CD4-positive, alpha-beta T cell (primary cell): ENCODE measurements at regions of chr1 and their contacts with region 1.

Region 1: DNA sequence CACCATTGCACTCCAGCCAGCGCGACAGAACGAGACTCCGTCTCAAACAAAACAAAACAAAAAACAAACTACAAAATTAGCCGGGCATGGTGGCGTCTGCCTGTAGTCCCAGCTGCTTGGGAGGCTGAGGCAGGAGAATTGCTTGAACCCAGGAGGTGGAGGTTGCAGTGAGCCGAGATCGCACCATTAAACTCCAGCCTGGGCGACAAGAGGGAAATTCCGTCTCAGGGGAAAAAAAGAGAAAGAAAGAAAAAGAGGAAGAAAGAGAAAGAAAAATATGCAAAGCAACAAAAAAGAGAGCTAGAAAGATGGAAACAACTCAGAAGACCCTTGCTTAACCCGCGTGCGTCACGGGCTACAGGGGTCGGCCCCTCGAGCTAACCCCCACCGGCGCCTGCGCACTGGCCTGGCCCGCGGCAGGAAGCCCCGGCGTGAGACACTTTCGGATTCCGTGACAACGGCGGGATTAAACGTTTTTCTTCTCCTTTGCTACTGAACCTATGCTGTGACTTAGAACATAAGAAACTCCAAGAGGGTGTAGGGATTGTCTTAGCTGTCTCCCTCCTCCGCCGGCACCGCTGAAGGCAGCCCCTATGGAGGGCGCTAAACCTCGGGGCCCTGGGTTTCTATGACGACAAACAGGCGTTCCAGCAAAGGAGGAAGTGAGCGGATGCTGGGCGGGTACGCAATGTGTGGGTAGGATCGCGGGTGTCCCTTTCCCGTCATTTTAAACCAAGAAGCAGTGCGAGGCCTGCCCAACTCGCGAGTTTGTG is at the start of gene AXDND1:
- DNase-seq: peak; percentile 80 to 96 (median 86)
- ATAC-seq: peak; percentile 90
- H3K4me3 ChIP-seq: peak within 1 kb of the TSS; percentile 79
- H3K4me3 Mint-ChIP-seq: peak within 1 kb of the TSS; percentile 96
- H3K27ac ChIP-seq: peak within 1 kb of the TSS; percentile 94 to 99
- H3K27ac Mint-ChIP-seq: peak within 1 kb of the TSS; percentile 99
- H3K4me1 ChIP-seq: peaks cover 14% of the 10 kb centered on the region
- H3K4me1 Mint-ChIP-seq: peaks cover 14% of the 10 kb centered on the region
- H3K27me3 ChIP-seq: no peaks in the 10 kb centered on the region
- H3K27me3 Mint-ChIP-seq: no peaks in the 10 kb centered on the region
- CTCF ChIP-seq: no peak
- total RNA-seq, gene AXDND1: 1.1 TPM

Region 2: GRCh38 chr1:177561436-177561835 is 1804.1 kb before region 1 on chr1:
- CTCF ChIA-PET with region 1: no interaction called
- POLR2A ChIA-PET with region 1: no interaction called
- intact Hi-C with region 1: no loop called
- DNase-seq: no peak
- ATAC-seq: no peak
- H3K4me3 ChIP-seq: no peak overlapping the region
- H3K4me3 Mint-ChIP-seq: no peak overlapping the region
- H3K27ac ChIP-seq: no peak overlapping the region
- H3K27ac Mint-ChIP-seq: no peak overlapping the region
- H3K4me1 ChIP-seq: no peaks in the 10 kb centered on the region
- H3K4me1 Mint-ChIP-seq: no peaks in the 10 kb centered on the region
- H3K27me3 ChIP-seq: no peaks in the 10 kb centered on the region
- H3K27me3 Mint-ChIP-seq: no peaks in the 10 kb centered on the region
- CTCF ChIP-seq: no peak

Region 3: DNA sequence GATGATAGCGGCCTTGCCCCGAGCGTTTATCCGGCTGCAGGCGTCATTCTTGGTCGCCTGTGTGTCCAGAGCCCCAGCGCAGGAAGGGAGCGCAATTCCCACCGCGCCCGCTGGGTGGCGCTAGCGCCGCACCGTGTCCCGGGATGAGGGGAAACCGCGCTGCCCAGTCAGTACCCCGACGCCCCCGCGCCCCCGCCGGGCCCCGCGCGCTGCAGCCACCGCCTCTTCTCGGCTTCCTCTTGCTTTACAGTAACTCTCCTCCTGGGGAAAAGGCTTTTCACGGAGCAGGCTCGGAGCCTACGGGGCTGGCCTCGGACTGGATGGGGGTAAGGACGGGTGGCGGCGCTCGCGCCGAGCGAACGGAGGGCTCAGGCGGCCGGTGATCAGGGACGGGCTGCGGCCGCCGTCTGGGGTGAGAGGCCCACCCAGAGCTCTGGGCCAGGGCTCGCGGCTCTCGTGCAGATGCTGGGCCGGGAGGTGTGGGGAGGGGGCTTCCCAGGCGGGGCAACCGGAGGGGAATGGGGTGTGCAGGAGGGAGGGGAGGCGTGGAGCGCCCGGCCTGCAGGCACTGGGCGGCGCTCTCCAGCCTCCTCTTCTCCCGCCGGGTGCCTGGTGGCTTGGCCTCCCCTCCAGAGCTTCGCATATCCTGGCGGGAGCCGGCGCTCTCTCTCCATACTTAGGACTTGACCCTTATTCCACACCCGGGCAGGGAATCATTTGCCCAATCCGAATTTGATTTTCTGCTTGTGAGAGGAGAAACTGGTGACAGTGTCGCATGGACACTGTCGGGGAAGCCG is 822.7 kb before region 1 on chr1:
- CTCF ChIA-PET with region 1: no interaction called
- POLR2A ChIA-PET with region 1: no interaction called
- intact Hi-C with region 1: loop called in 1 of 2 experiments (anchors 5 kb)
- DNase-seq: peak; percentile 59 to 91 (median 84)
- ATAC-seq: peak; percentile 90
- H3K4me3 ChIP-seq: peak overlapping the region; percentile 77
- H3K4me3 Mint-ChIP-seq: peak overlapping the region; percentile 93
- H3K27ac ChIP-seq: no peak overlapping the region
- H3K27ac Mint-ChIP-seq: peak overlapping the region; percentile 39
- H3K4me1 ChIP-seq: peaks cover 16% of the 10 kb centered on the region
- H3K4me1 Mint-ChIP-seq: peaks cover 10% of the 10 kb centered on the region
- H3K27me3 ChIP-seq: no peaks in the 10 kb centered on the region
- H3K27me3 Mint-ChIP-seq: no peaks in the 10 kb centered on the region
- CTCF ChIP-seq: peak; percentile 99

Region 4: GRCh38 chr1:179025125-179025974 is 340.2 kb before region 1 on chr1 and contains the start of gene FAM20B:
- CTCF ChIA-PET with region 1: no interaction called
- POLR2A ChIA-PET with region 1: interaction called, 3 read pairs
- intact Hi-C with region 1: loop called (anchors 2 to 5 kb)
- DNase-seq: peak; percentile 79 to 95 (median 90)
- ATAC-seq: peak; percentile 85
- H3K4me3 ChIP-seq: peak within 1 kb of the TSS; percentile 76
- H3K4me3 Mint-ChIP-seq: peak within 1 kb of the TSS; percentile 89
- H3K27ac ChIP-seq: peak within 1 kb of the TSS; percentile 46 to 51
- H3K27ac Mint-ChIP-seq: peak within 1 kb of the TSS; percentile 76
- H3K4me1 ChIP-seq: peaks cover 17% of the 10 kb centered on the region
- H3K4me1 Mint-ChIP-seq: peaks cover 48% of the 10 kb centered on the region
- H3K27me3 ChIP-seq: no peaks in the 10 kb centered on the region
- H3K27me3 Mint-ChIP-seq: no peaks in the 10 kb centered on the region
- CTCF ChIP-seq: no peak
- total RNA-seq, gene FAM20B: 12.1 to 12.9 TPM

Region 5: DNA sequence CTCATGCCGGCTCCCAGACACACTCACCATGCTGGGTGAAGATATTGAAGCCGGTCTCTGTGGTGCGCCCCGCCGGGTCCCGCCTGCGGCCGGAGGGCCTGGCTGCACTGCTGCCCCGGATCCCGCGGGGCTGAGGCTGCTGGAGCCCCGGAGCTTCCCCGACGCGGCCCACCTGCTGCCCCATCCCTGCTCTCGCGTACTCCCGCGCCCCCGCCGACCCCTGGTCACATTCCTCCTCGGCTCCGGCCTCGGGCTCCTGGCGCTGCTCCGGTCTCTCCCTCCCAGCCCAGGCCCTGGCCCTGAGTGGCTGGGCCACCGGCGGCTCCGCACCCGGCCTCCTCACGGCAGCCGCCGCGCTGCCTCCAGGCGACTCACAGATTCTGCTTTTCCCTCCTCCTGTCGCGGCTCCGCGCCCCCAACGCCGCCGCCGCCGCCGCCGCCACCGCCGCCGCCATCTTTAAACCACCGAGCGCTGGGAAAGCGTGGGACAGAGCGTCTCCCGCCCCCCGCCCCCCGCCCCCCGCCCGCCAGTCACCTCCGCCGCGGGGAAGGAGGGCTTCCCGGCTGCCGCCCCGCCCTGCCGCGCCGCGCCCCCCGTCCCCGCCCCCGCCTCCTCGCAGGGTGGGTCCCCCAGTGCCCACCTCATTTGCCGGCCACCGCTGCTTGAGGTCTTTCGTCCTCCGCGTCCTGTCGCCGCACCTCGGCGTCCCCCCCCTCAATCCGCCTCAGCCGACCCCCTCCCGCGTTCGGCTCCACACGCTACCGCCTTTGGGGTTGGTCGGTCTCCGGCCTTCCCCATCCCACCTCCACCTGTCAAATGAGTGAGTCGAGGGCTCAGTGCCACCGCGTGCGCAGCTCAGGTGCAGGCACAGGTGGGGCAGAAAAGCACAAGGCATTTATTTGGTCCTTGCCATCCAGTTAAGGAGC is 136.0 kb before region 1 on chr1 and contains the start of gene ABL2:
- CTCF ChIA-PET with region 1: no interaction called
- POLR2A ChIA-PET with region 1: interaction called, 5 read pairs
- intact Hi-C with region 1: loop called in 1 of 2 experiments (anchors 5 kb)
- DNase-seq: peak; percentile 11 to 74 (median 45)
- ATAC-seq: peak; percentile 63
- H3K4me3 ChIP-seq: peak within 1 kb of the TSS; percentile 57
- H3K4me3 Mint-ChIP-seq: peak within 1 kb of the TSS; percentile 98
- H3K27ac ChIP-seq: peak within 1 kb of the TSS in 1 of 2 donors; percentile 57
- H3K27ac Mint-ChIP-seq: peak within 1 kb of the TSS; percentile 82
- H3K4me1 ChIP-seq: peaks cover 11% of the 10 kb centered on the region
- H3K4me1 Mint-ChIP-seq: peaks cover 35% of the 10 kb centered on the region
- H3K27me3 ChIP-seq: no peaks in the 10 kb centered on the region
- H3K27me3 Mint-ChIP-seq: no peaks in the 10 kb centered on the region
- CTCF ChIP-seq: no peak
- total RNA-seq, gene ABL2: 15.8 to 16.4 TPM

Region 6: GRCh38 chr1:179809506-179810366 is 444.2 kb after region 1 on chr1:
- CTCF ChIA-PET with region 1: no interaction called
- POLR2A ChIA-PET with region 1: interaction called, 4 read pairs
- intact Hi-C with region 1: loop called in 1 of 2 experiments (anchors 10 kb)
- DNase-seq: peak; percentile 52 to 89 (median 60)
- ATAC-seq: peak; percentile 80
- H3K4me3 ChIP-seq: no peak overlapping the region
- H3K4me3 Mint-ChIP-seq: no peak overlapping the region
- H3K27ac ChIP-seq: no peak overlapping the region
- H3K27ac Mint-ChIP-seq: peak overlapping the region; percentile 8
- H3K4me1 ChIP-seq: peaks cover 13% of the 10 kb centered on the region
- H3K4me1 Mint-ChIP-seq: peaks cover 9% of the 10 kb centered on the region
- H3K27me3 ChIP-seq: no peaks in the 10 kb centered on the region
- H3K27me3 Mint-ChIP-seq: peaks cover 5% of the 10 kb centered on the region
- CTCF ChIP-seq: peak; percentile 88

Region 7: GRCh38 chr1:180502360-180503273 is 1137.1 kb after region 1 on chr1 and contains the start of gene ACBD6:
- CTCF ChIA-PET with region 1: no interaction called
- POLR2A ChIA-PET with region 1: no interaction called
- intact Hi-C with region 1: loop called in 1 of 2 experiments (anchors 5 kb)
- DNase-seq: peak; percentile 76 to 94 (median 83)
- ATAC-seq: peak; percentile 90
- H3K4me3 ChIP-seq: peak within 1 kb of the TSS; percentile 98
- H3K4me3 Mint-ChIP-seq: peak within 1 kb of the TSS; percentile 92
- H3K27ac ChIP-seq: peak within 1 kb of the TSS; percentile 74 to 85
- H3K27ac Mint-ChIP-seq: peak within 1 kb of the TSS; percentile 94
- H3K4me1 ChIP-seq: peaks cover 23% of the 10 kb centered on the region
- H3K4me1 Mint-ChIP-seq: peaks cover 43% of the 10 kb centered on the region
- H3K27me3 ChIP-seq: no peaks in the 10 kb centered on the region
- H3K27me3 Mint-ChIP-seq: no peaks in the 10 kb centered on the region
- CTCF ChIP-seq: no peak
- total RNA-seq, gene ACBD6: 28.2 to 28.8 TPM